Gastrocnemius medialis (tissue), 4 donors: ENCODE measurements at regions of chr11 and their contacts with region 1.

Region 1: DNA sequence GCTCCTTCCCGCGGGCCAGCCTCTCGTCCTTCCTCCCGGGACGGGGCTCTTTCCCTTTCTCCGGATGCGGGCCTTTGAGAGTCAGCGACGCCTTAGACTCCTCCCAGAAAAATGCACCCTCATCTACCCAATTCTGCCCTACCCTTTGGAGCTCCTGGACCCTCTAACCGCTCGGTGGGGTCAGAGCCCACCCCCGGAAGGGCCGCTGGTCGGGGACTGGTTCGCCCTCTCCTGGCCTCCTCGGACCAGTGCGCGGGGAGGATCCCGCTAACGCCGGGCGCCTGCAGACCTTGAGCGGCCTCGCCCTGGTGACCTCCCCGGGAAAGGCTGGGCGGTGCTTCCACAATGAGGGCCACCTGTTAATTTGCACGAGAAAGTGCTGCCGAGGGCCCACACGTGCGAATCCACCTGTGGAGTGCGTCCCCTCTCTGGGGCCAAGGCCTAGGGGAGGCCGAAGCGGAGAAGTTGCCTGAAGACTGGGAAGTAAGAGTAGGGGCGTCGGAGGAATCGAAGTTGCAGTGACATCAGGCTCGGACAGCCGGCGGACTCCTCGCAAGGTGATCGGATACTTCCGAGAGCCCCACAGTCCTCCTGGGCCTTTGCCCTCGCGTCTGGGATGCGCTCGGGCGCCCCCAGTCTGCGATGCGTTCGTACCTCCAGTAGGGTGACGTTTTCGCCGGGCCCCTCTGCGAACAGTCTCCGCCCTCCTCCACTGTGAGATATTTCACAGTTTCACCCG is 61.5 kb downstream of the ENDOD1 start:
- DNase-seq: peak; percentile 85 to 86
- ATAC-seq: peak; percentile 84 to 86
- H3K4me3 ChIP-seq: peak overlapping the region; percentile 63 to 73 (median 72)
- H3K27ac ChIP-seq: peak overlapping the region; percentile 80 to 89 (median 84)
- H3K4me1 ChIP-seq: peaks cover 30 to 31% of the 10 kb centered on the region in 2 donors
- H3K27me3 ChIP-seq: no peaks in the 10 kb centered on the region
- CTCF ChIP-seq: peak; percentile 80 to 93 (median 83)
- POLR2A ChIP-seq: peak; percentile 49 to 60

Region 2: DNA sequence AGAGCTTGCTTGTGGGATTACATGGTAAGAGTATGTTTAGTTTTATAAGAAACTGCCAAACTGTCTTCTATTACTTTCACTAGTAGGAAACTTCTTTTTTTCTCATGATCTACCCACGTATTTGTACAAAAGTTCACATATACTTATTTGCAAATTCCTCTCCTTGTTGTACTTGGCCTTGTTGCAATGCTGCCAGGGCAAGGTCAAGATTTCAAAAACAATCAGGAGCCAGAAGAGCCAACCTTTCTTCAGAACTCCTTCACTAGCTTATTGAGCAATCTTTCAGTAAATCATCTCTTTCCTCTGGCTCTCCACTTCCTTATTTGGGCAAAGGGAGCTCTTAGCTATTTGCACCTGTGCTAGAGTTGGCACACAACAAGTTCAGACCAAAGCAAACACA is 74.7 kb before region 1 on chr11:
- in situ Hi-C with region 1: loop called in 1 of 4 experiments (anchors 5 kb)
- intact Hi-C with region 1: no loop called
- DNase-seq: no peak
- ATAC-seq: no peak
- H3K4me3 ChIP-seq: no peak overlapping the region
- H3K27ac ChIP-seq: no peak overlapping the region
- H3K4me1 ChIP-seq: peaks cover 18 to 19% of the 10 kb centered on the region in 2 donors
- H3K27me3 ChIP-seq: no peaks in the 10 kb centered on the region
- CTCF ChIP-seq: no peak
- POLR2A ChIP-seq: no peak

Region 3: GRCh38 chr11:95108159-95108611 is 42.9 kb before region 1 on chr11:
- in situ Hi-C with region 1: no loop called
- intact Hi-C with region 1: loop called (anchors 2 kb)
- DNase-seq: peak; percentile 66 to 80
- ATAC-seq: peak; percentile 63 to 78
- H3K4me3 ChIP-seq: peak overlapping the region; percentile 48 to 53 (median 52)
- H3K27ac ChIP-seq: peak overlapping the region; percentile 85 to 94 (median 90)
- H3K4me1 ChIP-seq: peaks cover 81 to 96% of the 10 kb centered on the region in 2 donors
- H3K27me3 ChIP-seq: no peaks in the 10 kb centered on the region
- CTCF ChIP-seq: no peak
- POLR2A ChIP-seq: peak; percentile 2 to 29

Region 4: DNA sequence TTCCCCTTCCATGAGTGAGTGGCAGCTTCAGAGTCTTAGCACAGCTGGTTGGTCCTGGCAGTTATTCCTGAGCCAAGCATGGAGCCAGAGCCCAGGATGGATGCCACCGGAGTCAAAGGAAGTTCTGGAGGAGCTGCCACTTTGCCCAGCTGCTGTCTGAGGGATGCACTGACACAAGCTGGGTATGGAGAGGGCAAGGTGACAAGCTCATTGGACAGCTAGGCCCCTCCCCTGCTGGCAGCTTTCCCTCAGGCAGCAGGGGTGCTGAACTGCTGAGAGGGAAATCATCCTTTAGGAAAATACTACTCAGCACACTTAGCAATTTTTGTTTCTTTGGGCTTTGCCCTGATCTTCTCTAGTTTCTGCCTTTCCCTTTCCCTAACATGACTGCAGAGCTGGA is 179.2 kb after region 1 on chr11:
- in situ Hi-C with region 1: no loop called
- intact Hi-C with region 1: no loop called
- DNase-seq: no peak
- ATAC-seq: no peak
- H3K4me3 ChIP-seq: no peak overlapping the region
- H3K27ac ChIP-seq: no peak overlapping the region
- H3K4me1 ChIP-seq: no peaks in the 10 kb centered on the region
- H3K27me3 ChIP-seq: no peaks in the 10 kb centered on the region
- CTCF ChIP-seq: no peak
- POLR2A ChIP-seq: no peak

Region 5: GRCh38 chr11:95545116-95545875 is 394.2 kb after region 1 on chr11:
- in situ Hi-C with region 1: loop called in 1 of 4 experiments (anchors 25 kb)
- intact Hi-C with region 1: no loop called
- DNase-seq: no peak
- ATAC-seq: no peak
- H3K4me3 ChIP-seq: no peak overlapping the region
- H3K27ac ChIP-seq: no peak overlapping the region
- H3K4me1 ChIP-seq: no peaks in the 10 kb centered on the region
- H3K27me3 ChIP-seq: no peaks in the 10 kb centered on the region
- CTCF ChIP-seq: no peak
- POLR2A ChIP-seq: no peak

Region 6: GRCh38 chr11:95764267-95764898 is 613.3 kb after region 1 on chr11:
- in situ Hi-C with region 1: loop called in 3 of 4 experiments (anchors 10 kb)
- intact Hi-C with region 1: loop called (anchors 1 kb)
- DNase-seq: no peak
- ATAC-seq: peak in 1 of 2 donors; percentile 58
- H3K4me3 ChIP-seq: no peak overlapping the region
- H3K27ac ChIP-seq: no peak overlapping the region
- H3K4me1 ChIP-seq: no peaks in the 10 kb centered on the region
- H3K27me3 ChIP-seq: no peaks in the 10 kb centered on the region
- CTCF ChIP-seq: peak; percentile 42 to 72 (median 63)
- POLR2A ChIP-seq: no peak